AG04449 (cell line): ENCODE measurements at regions of chr3 and their contacts with region 1.

Region 1: GRCh38 chr3:48439820-48440589 is at the starts of genes CCDC51 and TMA7:
- DNase-seq: peak; percentile 72
- H3K4me3 ChIP-seq: peak within 1 kb of the TSS; percentile 98
- CTCF ChIP-seq: no peak

Region 2: DNA sequence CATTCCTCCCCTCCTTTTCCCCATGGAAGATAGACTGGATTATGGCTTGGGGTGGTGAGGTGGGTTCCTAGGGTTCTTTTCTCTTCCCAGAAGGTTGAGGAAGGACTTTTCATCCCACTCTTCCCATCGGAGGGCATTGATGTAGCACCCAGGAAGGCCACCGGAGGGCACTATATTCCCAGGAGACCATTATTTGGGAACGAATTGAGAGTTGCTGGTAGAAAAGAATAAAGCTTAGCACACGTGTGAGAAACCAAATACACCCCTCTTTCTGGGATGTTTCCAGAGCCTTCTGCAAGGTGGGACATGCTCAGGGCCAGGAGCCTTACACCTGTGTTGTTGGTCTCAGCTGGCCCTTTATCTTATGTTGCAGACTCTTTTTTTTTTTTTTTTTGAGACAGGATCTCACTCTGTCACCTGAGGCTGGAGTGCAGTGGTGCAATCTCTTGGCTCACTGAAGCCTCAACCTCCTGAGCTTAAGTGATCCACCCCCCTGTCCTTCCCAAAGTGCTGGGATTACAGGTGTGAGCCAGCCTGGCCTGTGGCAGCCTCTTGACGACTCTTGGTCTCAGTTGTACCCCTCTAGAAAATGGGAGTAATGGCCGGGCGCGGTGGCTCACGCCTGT is 245.4 kb before region 1 on chr3:
- CTCF ChIA-PET with region 1: interaction called, 139 read pairs
- POLR2A ChIA-PET with region 1: no interaction called
- DNase-seq: no peak
- H3K4me3 ChIP-seq: no peak overlapping the region
- CTCF ChIP-seq: peak; percentile 79

Region 3: DNA sequence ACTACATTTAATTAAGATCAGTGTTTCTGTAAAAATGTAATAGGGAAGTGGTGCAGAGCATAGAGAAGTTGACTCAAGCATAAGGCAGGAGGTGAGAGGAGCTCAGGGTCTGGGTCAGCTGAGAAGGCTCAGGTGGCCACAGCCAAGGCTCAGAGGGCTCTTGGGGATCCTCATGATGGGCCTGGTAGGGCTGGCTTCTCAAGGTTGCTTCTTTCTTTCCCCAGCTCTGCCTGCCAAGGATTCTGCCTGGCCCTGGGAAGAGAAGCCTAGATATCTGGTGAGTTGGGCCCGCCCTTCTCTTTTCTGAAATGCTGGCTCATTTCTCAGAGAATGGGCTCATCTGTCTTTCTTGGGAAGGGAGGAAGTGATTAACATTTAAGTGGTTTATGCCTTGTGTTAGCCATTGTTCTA is 192.6 kb before region 1 on chr3:
- CTCF ChIA-PET with region 1: interaction called, 47 read pairs
- POLR2A ChIA-PET with region 1: no interaction called
- DNase-seq: no peak
- H3K4me3 ChIP-seq: no peak overlapping the region
- CTCF ChIP-seq: no peak

Region 4: GRCh38 chr3:48294611-48295263 is 145.3 kb before region 1 on chr3:
- CTCF ChIA-PET with region 1: interaction called, 40 read pairs
- POLR2A ChIA-PET with region 1: no interaction called
- DNase-seq: no peak
- H3K4me3 ChIP-seq: no peak overlapping the region
- CTCF ChIP-seq: no peak

Region 5: DNA sequence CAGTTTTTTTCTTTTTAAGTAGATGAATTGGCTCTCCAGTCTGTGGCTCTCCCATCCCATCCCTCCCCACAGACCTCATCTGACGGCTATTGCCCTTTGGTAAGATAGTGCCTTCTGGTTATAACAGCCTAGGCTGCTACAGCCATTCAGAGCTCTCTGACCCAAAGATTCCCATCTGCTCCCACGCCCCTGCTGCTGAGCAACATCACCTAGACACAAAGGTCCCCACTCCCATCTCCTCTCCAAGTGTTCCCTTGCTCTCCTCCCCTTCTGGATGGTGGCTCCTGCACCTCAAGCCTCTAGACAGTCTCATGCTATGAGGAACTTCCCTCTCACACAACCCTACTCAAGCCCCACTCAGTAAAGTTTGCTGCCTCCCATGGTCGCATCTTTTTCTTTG is 44.3 kb before region 1 on chr3:
- CTCF ChIA-PET with region 1: interaction called, 749 read pairs
- POLR2A ChIA-PET with region 1: interaction called, 10 read pairs
- DNase-seq: no peak
- H3K4me3 ChIP-seq: no peak overlapping the region
- CTCF ChIP-seq: no peak

Region 6: DNA sequence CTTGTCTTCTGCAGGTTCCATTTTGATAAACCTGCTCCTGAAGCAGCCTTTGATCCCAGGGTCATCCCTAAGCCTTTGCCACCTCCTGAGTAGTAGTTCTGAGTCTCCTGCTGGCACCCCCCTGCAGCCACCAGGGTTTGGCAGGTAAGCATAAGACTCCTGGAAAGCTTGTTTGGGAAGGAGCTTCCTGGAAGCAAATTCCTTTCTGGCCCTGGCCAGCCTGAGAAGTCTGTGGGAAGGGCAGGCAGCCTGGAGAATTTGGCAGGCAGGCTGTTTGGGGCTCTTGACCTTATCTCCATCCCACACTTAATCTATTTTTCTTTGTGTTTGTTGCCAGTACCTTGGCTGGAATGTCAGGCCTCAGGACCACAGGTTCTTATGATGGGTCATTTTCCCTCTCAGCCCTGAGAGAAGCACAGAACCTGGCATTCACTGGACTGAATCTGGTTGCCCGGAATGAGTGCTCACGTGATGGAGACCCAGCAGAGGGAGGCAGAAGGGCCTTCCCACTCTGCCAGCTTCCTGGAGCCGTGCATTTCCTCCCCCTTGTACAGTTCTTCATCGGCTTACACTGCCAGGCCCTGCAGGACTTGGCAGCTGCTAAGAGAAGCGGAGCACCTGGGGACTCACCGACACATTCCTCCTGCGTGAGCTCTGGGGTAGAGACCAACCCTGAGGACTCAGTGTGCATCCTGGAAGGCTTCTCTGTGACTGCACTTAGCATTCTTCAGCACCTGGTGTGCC is 19.9 kb after region 1 on chr3:
- CTCF ChIA-PET with region 1: interaction called, 32 read pairs
- POLR2A ChIA-PET with region 1: interaction called, 3 read pairs
- DNase-seq: no peak
- H3K4me3 ChIP-seq: no peak overlapping the region
- CTCF ChIP-seq: no peak